ENCODE measurements at regions of chr11 and their contacts with region 1.

Region 1: DNA sequence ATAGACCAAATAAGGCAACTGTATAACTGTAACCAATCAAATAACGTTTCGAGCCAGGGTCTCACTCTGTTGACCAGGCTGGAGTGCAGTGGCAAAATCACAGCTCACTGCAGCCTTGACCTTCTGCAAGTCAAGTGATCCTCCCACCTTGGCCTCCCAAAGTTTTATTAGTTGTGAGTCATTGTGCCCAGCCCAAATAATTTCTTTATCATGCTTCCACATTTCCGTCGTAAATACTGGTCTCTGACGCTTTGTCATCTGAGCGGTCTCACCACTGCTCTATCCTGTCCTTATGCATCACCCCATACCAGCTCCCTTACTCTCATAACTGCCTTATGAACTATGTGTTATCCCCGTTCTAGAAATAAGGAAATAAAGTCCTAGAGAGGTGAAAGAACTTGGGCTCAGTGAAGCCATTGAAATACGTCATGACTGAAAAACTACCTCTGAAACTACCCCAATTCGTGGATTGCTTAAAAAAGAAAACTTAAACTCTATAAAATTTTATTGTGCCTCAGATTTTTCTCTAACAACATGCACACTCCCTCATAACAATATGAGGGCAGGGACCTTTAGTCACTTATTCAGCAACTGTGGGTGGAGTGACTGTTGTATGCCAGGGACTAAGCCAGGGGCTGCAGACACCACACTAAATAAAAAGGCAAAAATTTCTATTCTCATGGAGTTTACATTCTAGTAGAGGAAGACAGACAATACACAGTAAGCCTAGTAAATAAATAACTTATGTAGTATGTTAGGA is 15.8 kb upstream of the RTN4RL2 start:
- DNase-seq: peak; percentile 98
- ATAC-seq: peak; percentile 88
- H3K4me3 ChIP-seq: peak overlapping the region; percentile 14; the same call in 1 of the 2 replicates
- H3K27ac ChIP-seq: peak overlapping the region; percentile 93
- H3K4me1 ChIP-seq: peaks cover 43% of the 10 kb centered on the region
- H3K27me3 ChIP-seq: no peaks in the 10 kb centered on the region
- CTCF ChIP-seq: no peak

Region 2: DNA sequence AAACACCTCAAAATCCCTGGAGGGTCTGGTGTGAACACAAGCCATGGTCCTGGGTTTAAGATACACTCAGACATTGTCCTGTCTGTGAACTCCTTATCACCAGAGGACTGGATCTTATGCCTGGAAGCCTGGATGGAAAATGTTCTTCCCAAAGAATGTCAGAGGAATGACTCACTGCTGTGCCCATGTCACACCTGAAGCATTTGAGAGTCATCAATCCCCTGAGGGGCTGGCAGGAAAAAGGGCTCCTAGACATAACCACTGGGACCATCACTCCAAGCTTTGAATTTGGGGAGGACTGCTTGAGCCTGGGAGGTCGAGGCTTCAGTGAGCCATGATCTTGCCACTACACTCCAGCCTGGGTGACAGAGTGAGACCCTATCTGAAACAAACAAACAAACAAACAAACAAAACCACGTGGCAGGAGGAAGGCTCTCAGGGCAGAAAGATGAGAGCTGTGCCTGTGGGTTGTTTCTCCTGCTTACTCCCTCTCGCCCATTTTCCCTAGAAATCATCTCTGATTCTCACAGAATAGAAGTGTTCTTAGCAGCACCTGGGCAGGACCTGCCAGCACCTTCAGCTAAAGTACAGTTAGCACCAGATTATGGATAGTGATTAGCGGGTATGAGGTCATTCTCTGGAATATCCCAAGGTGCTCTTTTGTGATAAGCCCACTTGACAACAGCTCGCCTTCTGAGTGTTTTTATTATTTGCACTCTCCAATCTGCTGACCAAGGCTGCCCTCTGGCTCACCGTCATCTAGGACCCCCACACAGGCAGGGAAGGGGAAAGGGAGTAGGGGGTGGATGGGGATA is 42.1 kb before region 1 on chr11:
- CTCF ChIA-PET with region 1: no interaction called
- POLR2A ChIA-PET with region 1: interaction called, 9 read pairs
- intact Hi-C with region 1: loop called (anchors 5 kb)
- DNase-seq: peak; percentile 96
- ATAC-seq: peak; percentile 56
- H3K4me3 ChIP-seq: no peak overlapping the region
- H3K27ac ChIP-seq: peak overlapping the region; percentile 78
- H3K4me1 ChIP-seq: peaks cover 55% of the 10 kb centered on the region
- H3K27me3 ChIP-seq: no peaks in the 10 kb centered on the region
- CTCF ChIP-seq: no peak

Region 3: DNA sequence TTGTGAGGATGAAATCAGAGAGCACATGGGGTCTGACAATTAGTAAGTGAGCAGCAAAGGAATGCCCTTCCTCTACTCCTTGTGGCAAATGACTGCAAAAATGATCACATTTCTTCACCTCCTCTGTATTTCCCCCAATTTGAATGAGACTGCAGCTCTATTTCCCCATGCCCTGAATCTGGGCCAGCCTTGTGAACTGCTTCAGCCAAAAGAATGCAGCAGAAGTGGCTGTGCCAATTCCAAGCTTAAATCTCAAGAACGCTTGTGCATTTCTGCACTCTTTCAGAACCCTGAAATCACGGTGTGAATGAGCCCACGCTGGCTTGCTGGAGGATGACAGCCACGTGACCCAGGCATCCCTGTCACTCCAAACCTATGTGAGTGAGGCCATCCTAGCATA is 27.5 kb before region 1 on chr11:
- CTCF ChIA-PET with region 1: no interaction called
- POLR2A ChIA-PET with region 1: no interaction called
- intact Hi-C with region 1: no loop called
- DNase-seq: no peak
- ATAC-seq: no peak
- H3K4me3 ChIP-seq: no peak overlapping the region
- H3K27ac ChIP-seq: no peak overlapping the region
- H3K4me1 ChIP-seq: no peaks in the 10 kb centered on the region
- H3K27me3 ChIP-seq: no peaks in the 10 kb centered on the region
- CTCF ChIP-seq: no peak

Region 4: DNA sequence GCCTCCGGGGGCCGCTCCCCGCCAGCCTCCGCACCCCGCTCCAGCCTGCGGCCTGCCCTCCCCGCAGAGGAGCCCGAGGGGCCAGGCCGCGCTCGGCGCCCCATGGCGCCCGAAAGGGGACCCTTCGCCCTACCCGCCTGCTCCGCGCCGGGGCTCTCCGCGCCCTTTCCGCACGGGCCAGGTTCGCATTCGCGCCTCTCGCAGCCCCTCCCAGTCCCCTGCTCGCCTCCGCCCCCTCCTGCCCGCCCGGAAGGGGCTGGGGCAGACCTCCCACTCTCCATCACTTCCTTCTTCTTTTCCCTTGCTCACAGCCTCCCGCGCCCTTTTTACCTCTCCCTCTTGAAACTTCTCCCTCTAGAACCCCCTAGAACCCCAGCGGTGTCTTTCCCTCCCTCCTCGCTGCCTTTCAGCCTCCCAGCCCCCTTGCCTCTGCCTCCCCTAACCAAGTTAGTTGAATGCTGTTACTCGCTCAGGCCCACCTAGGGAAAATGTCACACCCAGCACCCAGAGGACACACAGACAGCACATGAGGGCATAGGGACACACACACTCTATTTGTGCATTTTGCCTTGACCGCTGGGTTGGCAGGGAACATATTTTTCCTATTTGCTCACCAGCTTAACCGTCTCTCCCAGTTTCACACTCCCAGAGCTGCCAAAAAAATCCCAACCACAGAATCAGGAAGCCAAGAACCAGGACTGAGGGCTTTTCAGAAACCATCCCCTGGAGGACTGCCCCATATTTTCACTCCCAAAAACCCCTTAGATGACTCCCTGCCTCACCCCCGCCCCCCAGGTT is 17.4 kb before region 1 on chr11 and contains the start of gene SLC43A3:
- CTCF ChIA-PET with region 1: no interaction called
- POLR2A ChIA-PET with region 1: interaction called, 10 read pairs
- intact Hi-C with region 1: loop called (anchors 1 kb)
- DNase-seq: peak; percentile 88
- ATAC-seq: peak; percentile 73
- H3K4me3 ChIP-seq: peak within 1 kb of the TSS; percentile 62
- H3K27ac ChIP-seq: peak within 1 kb of the TSS; percentile 92
- H3K4me1 ChIP-seq: peaks cover 45% of the 10 kb centered on the region
- H3K27me3 ChIP-seq: no peaks in the 10 kb centered on the region
- CTCF ChIP-seq: no peak
- total RNA-seq, gene SLC43A3: 31.3 and 35.0 TPM in 2 replicates

Measured in PC-3 (cell line).